A673 (cell line): ENCODE measurements at regions of chr11 and their contacts with region 1.

Region 1: GRCh38 chr11:85664615-85665481 is at the start of gene CREBZF:
- DNase-seq: peak; percentile 98
- H3K4me3 ChIP-seq: peak within 1 kb of the TSS; percentile 87
- H3K27ac ChIP-seq: peak within 1 kb of the TSS; percentile 97
- H3K4me1 ChIP-seq: peaks cover 24% of the 10 kb centered on the region
- H3K27me3 ChIP-seq: peaks cover 4% of the 10 kb centered on the region
- CTCF ChIP-seq: no peak
- total RNA-seq, gene CREBZF: 74.1 and 76.6 TPM in 2 replicates

Region 2: DNA sequence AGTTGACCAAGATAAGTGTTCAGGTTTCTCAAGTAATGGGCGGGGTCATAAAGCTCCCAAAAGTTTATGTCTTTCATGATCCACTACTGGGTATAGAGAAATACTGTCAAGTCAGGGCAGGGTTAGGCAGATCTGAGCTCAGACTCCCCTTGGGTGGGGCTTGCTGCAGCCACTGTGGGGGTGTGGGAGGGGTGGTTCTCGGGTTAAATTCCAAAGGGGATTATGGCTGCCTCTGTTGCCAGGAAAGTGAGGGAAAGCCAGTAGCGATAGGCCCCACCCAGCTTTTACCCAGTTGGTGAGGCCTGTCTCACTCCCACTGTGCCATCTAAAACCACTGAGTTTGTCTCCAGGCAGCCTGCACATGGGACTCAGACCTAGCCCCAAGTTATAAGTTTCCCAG is 75.5 kb before region 1 on chr11:
- CTCF ChIA-PET with region 1: no interaction called
- POLR2A ChIA-PET with region 1: no interaction called
- intact Hi-C with region 1: no loop called
- DNase-seq: peak; percentile 64
- H3K4me3 ChIP-seq: no peak overlapping the region
- H3K27ac ChIP-seq: no peak overlapping the region
- H3K4me1 ChIP-seq: no peaks in the 10 kb centered on the region
- H3K27me3 ChIP-seq: no peaks in the 10 kb centered on the region
- CTCF ChIP-seq: no peak

Region 3: GRCh38 chr11:85627998-85628770 is 36.7 kb before region 1 on chr11 and contains the start of gene TMEM126B:
- CTCF ChIA-PET with region 1: no interaction called
- POLR2A ChIA-PET with region 1: interaction called, 3 read pairs
- intact Hi-C with region 1: loop called (anchors 1 kb)
- DNase-seq: peak; percentile 100
- H3K4me3 ChIP-seq: peak within 1 kb of the TSS; percentile 70
- H3K27ac ChIP-seq: peak within 1 kb of the TSS; percentile 76
- H3K4me1 ChIP-seq: peaks cover 16% of the 10 kb centered on the region
- H3K27me3 ChIP-seq: peaks cover 9% of the 10 kb centered on the region
- CTCF ChIP-seq: no peak
- total RNA-seq, gene TMEM126B: 70.4 and 80.5 TPM in 2 replicates